Mucosa of descending colon (tissue), 3 donors: ENCODE measurements at regions of chr9 and their contacts with region 1.

Region 1: GRCh38 chr9:68609901-68610415 is 69.3 kb upstream of the TMEM252 start:
- DNase-seq: peak in 2 of 3 donors; percentile 28 to 48
- ATAC-seq: peak; percentile 71
- H3K4me3 ChIP-seq: no peak overlapping the region
- H3K4me1 ChIP-seq: peaks cover 12% of the 10 kb centered on the region
- CTCF ChIP-seq: no peak

Region 2: DNA sequence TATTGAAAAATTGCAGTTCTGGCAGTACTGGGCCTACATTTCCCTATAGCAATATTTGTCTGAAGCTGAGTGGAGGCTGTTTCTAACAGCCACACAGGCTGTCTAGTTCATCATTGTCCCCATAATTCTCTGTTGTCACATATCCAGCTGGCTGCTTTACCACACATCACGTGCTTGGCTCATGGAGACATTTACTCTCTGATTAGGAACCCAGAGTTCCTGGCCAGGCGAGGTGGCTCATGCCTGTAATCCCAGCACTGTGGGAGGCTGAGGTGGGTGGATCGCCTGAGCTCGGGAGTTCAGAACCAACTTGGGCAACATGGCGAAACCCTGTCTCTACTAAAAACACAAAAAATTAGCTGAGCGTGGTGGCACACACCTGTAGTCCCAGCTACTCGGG is 172.2 kb before region 1 on chr9:
- intact Hi-C with region 1: no loop called
- DNase-seq: peak in 1 of 3 donors; percentile 35
- ATAC-seq: no peak
- H3K4me3 ChIP-seq: no peak overlapping the region
- H3K4me1 ChIP-seq: no peaks in the 10 kb centered on the region
- CTCF ChIP-seq: no peak

Region 3: GRCh38 chr9:68454579-68455334 is 155.2 kb before region 1 on chr9:
- intact Hi-C with region 1: no loop called
- DNase-seq: no peak
- ATAC-seq: no peak
- H3K4me3 ChIP-seq: no peak overlapping the region
- H3K4me1 ChIP-seq: no peaks in the 10 kb centered on the region
- CTCF ChIP-seq: no peak

Region 4: GRCh38 chr9:68546596-68547390 is 63.2 kb before region 1 on chr9:
- intact Hi-C with region 1: no loop called
- DNase-seq: peak in 1 of 3 donors; percentile 40
- ATAC-seq: peak; percentile 69
- H3K4me3 ChIP-seq: no peak overlapping the region
- H3K4me1 ChIP-seq: peaks cover 3% of the 10 kb centered on the region
- CTCF ChIP-seq: no peak

Region 5: GRCh38 chr9:69027355-69028096 is 417.6 kb after region 1 on chr9:
- intact Hi-C with region 1: loop called in 1 of 2 experiments (anchors 10 kb)
- DNase-seq: peak in 1 of 3 donors; percentile 64
- ATAC-seq: peak; percentile 89
- H3K4me3 ChIP-seq: no peak overlapping the region
- H3K4me1 ChIP-seq: no peaks in the 10 kb centered on the region
- CTCF ChIP-seq: peak; percentile 48